Transverse colon (tissue), 4 donors: ENCODE measurements at regions of chr21 and their contacts with region 1.

Region 1: GRCh38 chr21:31198575-31198974 is 145.5 kb downstream of the TIAM1 start:
- DNase-seq: no peak
- H3K4me3 ChIP-seq: no peak overlapping the region
- H3K27ac ChIP-seq: no peak overlapping the region
- H3K4me1 ChIP-seq: peaks cover 0 to 4% (median 0%) of the 10 kb centered on the region in 4 donors
- H3K27me3 ChIP-seq: no peaks in the 10 kb centered on the region
- CTCF ChIP-seq: peak; percentile 54 to 66 (median 56)
- EP300 ChIP-seq: no peak
- POLR2A ChIP-seq: no peak

Region 2: DNA sequence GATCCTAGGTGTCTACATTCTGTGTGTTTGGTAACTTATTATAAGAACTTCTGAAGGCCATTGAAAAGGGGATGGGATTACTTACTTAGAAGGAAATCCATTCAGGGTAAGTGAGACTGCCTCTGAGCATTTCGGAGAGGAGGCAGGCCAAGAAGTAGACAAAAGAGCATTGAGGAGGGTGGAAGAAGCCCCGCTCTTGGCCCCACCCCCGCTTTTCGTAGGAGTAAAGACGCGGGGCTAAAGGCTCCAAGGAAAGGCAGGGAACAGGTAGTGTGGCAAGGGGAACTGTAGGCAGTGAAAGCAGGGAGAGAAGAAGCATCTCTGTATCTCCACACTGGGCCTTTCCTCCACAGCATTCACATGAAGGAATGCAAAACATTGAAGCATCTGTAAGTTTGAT is 1207.0 kb before region 1 on chr21:
- in situ Hi-C with region 1: no loop called
- intact Hi-C with region 1: no loop called
- DNase-seq: no peak
- H3K4me3 ChIP-seq: no peak overlapping the region
- H3K27ac ChIP-seq: no peak overlapping the region
- H3K4me1 ChIP-seq: no peaks in the 10 kb centered on the region
- H3K27me3 ChIP-seq: no peaks in the 10 kb centered on the region
- CTCF ChIP-seq: no peak
- EP300 ChIP-seq: no peak
- POLR2A ChIP-seq: no peak

Region 3: DNA sequence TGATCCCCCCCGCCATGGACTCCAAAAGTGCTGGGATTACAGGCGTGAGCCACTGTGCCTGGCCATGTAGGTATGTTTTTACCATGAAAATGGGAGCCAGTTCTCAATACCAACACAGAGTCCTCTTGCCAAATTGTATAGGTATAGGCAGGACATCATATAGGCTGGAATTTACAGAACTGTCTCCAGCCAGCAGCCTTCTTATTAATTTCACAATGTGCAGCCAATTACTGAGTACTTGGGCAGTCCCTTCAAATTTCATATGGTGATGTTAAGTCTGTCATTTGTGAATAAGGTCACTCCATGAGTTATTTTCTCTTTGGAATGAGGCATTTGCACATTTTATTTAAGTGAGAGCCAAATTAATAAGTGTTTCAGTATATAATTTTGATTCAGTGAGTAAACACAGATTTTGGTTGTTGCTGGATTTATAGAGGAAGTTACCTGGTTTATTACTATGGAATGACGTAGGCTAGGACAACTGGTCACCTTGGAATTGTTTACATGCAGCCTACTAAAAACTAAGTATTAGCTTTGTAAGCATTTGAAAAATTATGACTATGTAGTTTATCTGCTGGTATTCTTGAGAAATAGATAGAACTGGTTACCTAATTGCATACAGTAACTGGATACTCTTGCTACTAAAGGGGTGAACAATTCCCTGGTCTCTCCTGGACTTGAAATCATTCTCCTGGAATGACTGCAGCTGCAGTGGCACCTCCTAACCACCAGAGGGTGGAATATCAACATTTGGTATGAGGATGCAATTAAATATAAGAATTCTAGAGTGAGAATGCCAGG is 857.9 kb before region 1 on chr21:
- in situ Hi-C with region 1: no loop called
- intact Hi-C with region 1: no loop called
- DNase-seq: peak; percentile 41
- H3K4me3 ChIP-seq: no peak overlapping the region
- H3K27ac ChIP-seq: no peak overlapping the region
- H3K4me1 ChIP-seq: no peaks in the 10 kb centered on the region
- H3K27me3 ChIP-seq: no peaks in the 10 kb centered on the region
- CTCF ChIP-seq: peak; percentile 71 to 88 (median 74)
- EP300 ChIP-seq: no peak
- POLR2A ChIP-seq: no peak

Region 4: DNA sequence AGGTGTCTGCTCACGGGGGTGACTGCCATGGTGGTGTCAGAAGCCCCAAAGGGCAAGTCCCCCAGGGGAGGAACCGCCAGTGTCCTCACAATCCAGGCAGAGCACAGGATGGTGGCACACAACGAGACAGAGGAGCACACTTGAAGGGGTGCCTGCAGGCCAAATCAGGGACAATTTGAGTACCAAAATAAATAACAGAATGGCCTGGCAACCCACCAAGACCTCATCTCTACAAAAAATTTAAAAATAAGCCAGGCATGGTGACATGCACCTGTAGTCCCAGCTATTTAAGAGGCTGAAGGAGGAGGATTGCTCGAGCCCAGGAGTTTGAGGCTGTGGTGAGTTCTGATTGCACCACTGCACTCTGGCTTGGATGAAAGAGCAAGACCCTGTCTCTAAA is 107.3 kb after region 1 on chr21:
- in situ Hi-C with region 1: no loop called
- intact Hi-C with region 1: no loop called
- DNase-seq: no peak
- H3K4me3 ChIP-seq: no peak overlapping the region
- H3K27ac ChIP-seq: no peak overlapping the region
- H3K4me1 ChIP-seq: no peaks in the 10 kb centered on the region
- H3K27me3 ChIP-seq: no peaks in the 10 kb centered on the region
- CTCF ChIP-seq: no peak
- EP300 ChIP-seq: no peak
- POLR2A ChIP-seq: no peak

Region 5: DNA sequence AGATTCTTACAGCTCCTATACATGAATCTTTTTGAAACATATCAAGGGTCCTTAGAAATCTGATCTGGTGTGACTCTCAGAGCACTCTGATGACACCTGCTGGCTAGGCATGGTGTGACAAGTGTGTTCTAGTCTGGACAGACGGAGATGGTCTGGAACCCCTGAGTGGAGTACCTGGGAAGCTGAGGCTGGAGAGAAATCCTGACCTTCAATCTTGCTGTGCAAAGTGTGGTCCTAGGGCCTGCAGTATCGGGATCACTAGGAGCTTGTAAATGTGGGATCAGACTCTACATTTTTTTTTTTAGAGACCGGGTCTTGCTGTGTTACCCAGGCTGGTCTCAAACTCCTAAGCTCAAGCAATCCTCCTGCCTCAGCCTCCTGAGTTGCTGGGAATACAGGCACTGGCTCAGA is 382.3 kb after region 1 on chr21:
- in situ Hi-C with region 1: loop called in 3 of 4 experiments (anchors 5 to 10 kb)
- intact Hi-C with region 1: loop called (anchors 5 kb)
- DNase-seq: peak; percentile 70
- H3K4me3 ChIP-seq: no peak overlapping the region
- H3K27ac ChIP-seq: no peak overlapping the region
- H3K4me1 ChIP-seq: no peaks in the 10 kb centered on the region
- H3K27me3 ChIP-seq: no peaks in the 10 kb centered on the region
- CTCF ChIP-seq: peak; percentile 70 to 81 (median 75)
- EP300 ChIP-seq: no peak
- POLR2A ChIP-seq: no peak

Region 6: DNA sequence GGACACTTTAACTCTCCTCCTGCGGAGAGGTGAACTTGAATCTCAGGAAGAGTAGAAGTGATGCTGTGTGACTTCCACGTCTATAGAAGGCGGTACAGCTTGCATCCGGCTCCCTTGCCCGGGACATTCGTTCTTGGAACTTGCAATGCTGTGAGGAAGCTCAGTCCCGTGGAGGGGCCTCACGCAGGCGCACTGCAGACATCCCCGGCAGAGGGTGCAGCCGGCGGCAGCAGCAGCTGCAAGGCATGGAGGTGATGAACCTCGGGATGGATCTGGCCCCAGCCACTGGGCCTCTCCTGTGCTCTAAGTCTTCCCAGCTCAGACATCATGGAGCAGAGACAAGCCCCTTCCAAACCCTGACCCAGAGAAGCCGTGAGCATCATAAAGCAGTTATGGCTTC is 399.1 kb after region 1 on chr21:
- in situ Hi-C with region 1: loop called in 2 of 4 experiments (anchors 5 to 10 kb)
- intact Hi-C with region 1: loop called (anchors 5 kb)
- DNase-seq: no peak
- H3K4me3 ChIP-seq: no peak overlapping the region
- H3K27ac ChIP-seq: no peak overlapping the region
- H3K4me1 ChIP-seq: no peaks in the 10 kb centered on the region
- H3K27me3 ChIP-seq: no peaks in the 10 kb centered on the region
- CTCF ChIP-seq: no peak
- EP300 ChIP-seq: no peak
- POLR2A ChIP-seq: no peak

Region 7: DNA sequence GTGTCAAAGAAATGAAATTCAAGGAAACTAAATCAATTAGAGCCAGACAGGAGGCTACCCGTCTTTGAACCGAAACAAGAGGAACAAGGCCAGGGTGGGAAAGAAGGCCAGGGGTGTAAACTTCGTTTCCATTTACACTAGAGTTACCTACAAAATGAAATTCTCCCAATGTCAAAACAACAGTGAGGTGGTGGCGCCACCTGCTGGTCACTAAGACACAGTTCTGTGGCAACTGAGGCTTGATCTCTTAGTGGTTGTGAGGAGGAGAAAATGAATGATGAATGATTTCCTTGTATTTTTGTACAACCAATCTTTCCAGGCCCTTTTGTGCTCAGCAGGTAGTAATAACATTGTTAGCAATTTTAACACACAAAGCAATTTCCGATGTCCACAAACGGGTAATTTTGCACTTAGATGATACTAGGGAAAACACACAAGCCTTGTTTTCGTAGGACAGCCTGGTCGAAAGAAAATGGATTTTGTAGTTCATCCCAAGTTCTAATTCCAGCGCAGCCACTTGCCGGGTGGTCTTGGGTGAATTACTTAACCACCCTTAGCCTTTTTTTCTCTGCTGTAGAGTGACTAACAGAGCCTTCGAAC is 406.1 kb after region 1 on chr21:
- in situ Hi-C with region 1: loop called in 2 of 4 experiments (anchors 5 to 10 kb)
- intact Hi-C with region 1: loop called (anchors 5 kb)
- DNase-seq: peak; percentile 65
- H3K4me3 ChIP-seq: no peak overlapping the region
- H3K27ac ChIP-seq: no peak overlapping the region
- H3K4me1 ChIP-seq: no peaks in the 10 kb centered on the region
- H3K27me3 ChIP-seq: no peaks in the 10 kb centered on the region
- CTCF ChIP-seq: peak; percentile 78 to 91 (median 83)
- EP300 ChIP-seq: no peak
- POLR2A ChIP-seq: no peak

Region 8: DNA sequence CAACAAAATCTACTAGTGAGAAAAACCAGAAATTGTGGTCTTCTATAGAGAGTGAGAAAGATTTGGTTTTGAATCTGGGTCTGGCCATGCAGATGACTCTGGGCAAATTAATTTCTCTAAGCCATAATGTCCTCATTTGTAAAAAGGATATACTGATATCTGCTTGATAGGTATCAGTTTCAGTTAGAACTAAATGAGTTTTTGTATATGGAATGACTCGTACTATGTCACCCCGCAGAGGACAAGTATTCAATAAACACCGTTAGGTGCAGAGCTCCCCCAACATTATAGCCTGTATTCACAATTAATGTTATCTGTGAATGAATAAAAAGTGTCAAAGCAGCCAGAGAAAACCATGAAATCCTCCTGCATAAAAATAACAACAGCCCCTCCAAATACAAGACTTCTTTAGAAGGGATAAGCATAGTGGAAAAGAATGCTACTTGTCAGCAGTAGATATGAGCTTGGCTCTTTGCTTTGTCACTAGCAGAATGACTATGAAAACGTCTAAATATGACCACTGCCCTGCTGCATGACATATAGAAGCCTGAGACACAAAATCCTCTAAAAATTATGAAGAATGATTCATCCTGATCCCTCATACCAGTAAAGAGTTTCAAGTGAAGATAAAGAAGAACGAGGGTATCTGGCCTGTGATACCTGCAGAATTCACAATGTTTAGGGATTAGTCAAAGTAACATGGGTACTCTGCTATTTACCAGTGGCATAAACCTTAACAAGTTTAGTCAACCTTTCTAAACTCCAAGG is 515.6 kb after region 1 on chr21:
- in situ Hi-C with region 1: no loop called
- intact Hi-C with region 1: no loop called
- DNase-seq: no peak
- H3K4me3 ChIP-seq: no peak overlapping the region
- H3K27ac ChIP-seq: no peak overlapping the region
- H3K4me1 ChIP-seq: peaks cover 0 to 41% (median 5%) of the 10 kb centered on the region in 4 donors
- H3K27me3 ChIP-seq: no peaks in the 10 kb centered on the region
- CTCF ChIP-seq: no peak
- EP300 ChIP-seq: no peak
- POLR2A ChIP-seq: no peak